Activated naive CD4-positive, alpha-beta T cell treated with anti-CD3 and anti-CD28 coated beads for 36 hours (primary cell): ENCODE measurements at regions of chr3 and their contacts with region 1.

Region 1: GRCh38 chr3:143951351-143951971 is 20.2 kb upstream of the DIPK2A start:
- DNase-seq: peak; percentile 48
- H3K4me3 Mint-ChIP-seq: no peak overlapping the region
- H3K27ac Mint-ChIP-seq: no peak overlapping the region
- H3K4me1 Mint-ChIP-seq: no peaks in the 10 kb centered on the region
- H3K27me3 Mint-ChIP-seq: peaks cover 8% of the 10 kb centered on the region

Region 2: GRCh38 chr3:143795874-143796273 is 155.6 kb before region 1 on chr3:
- CTCF ChIA-PET with region 1: no interaction called
- intact Hi-C with region 1: loop called (anchors 1 kb)
- DNase-seq: peak; percentile 10
- H3K4me3 Mint-ChIP-seq: no peak overlapping the region
- H3K27ac Mint-ChIP-seq: no peak overlapping the region
- H3K4me1 Mint-ChIP-seq: no peaks in the 10 kb centered on the region
- H3K27me3 Mint-ChIP-seq: no peaks in the 10 kb centered on the region

Region 3: GRCh38 chr3:143885780-143886427 is 65.6 kb before region 1 on chr3:
- CTCF ChIA-PET with region 1: interaction called, 11 read pairs
- intact Hi-C with region 1: loop called (anchors 1 kb)
- DNase-seq: peak; percentile 45
- H3K4me3 Mint-ChIP-seq: no peak overlapping the region
- H3K27ac Mint-ChIP-seq: no peak overlapping the region
- H3K4me1 Mint-ChIP-seq: no peaks in the 10 kb centered on the region
- H3K27me3 Mint-ChIP-seq: no peaks in the 10 kb centered on the region

Region 4: GRCh38 chr3:143988306-143988705 is 36.8 kb after region 1 on chr3:
- CTCF ChIA-PET with region 1: no interaction called
- intact Hi-C with region 1: no loop called
- DNase-seq: no peak
- H3K4me3 Mint-ChIP-seq: no peak overlapping the region
- H3K27ac Mint-ChIP-seq: no peak overlapping the region
- H3K4me1 Mint-ChIP-seq: peaks cover 8% of the 10 kb centered on the region
- H3K27me3 Mint-ChIP-seq: no peaks in the 10 kb centered on the region